Caco-2 (cell line): ENCODE measurements at regions of chr3 and their contacts with region 1.

Region 1: DNA sequence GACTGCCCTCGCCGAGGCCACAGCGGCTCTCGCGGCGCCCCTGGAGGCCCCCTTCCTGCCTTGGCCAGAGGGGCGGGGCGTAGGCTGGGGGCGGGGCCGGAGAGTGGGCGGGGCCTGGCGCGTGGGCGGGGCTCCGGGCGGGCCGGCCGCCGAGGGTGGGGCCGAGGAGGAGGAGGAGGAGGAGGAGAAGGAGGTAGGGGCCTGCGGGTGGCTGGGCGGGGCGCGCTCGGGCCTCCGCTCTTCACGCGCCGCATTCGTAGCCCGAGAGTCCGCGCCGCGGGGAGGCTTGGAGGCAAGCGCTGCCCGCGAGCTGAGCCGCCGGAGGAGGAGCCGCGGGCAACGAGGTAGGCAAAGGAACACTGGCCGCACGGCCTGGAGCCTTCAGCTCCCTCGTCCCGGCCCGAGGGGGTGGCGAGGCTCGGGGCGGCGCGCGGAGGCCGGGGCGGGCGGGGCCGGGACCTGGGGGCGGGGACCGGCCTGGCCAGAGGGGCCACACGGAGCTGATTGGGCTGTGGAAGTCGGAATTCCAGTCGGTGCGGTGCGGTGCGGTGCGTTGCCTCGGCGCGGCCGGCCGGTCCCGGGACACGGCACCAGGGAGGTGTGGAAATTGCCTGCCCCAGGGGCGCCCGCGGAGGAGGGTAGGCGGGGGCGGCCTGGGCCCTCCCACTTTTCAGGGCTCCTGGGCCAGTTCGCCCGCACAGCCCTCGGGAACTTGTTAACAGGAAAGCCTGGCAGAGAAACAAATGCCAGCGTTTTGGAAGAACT is at the start of gene PPP2R3A:
- DNase-seq: peak; percentile 87 to 88
- H3K4me3 ChIP-seq: peak within 1 kb of the TSS; percentile 54
- H3K4me3 Mint-ChIP-seq: peak within 1 kb of the TSS; percentile 75
- H3K27ac Mint-ChIP-seq: peak within 1 kb of the TSS; percentile 79
- H3K4me1 ChIP-seq: peaks cover 36% of the 10 kb centered on the region
- H3K4me1 Mint-ChIP-seq: peaks cover 35% of the 10 kb centered on the region
- H3K27me3 ChIP-seq: no peaks in the 10 kb centered on the region
- H3K27me3 Mint-ChIP-seq: no peaks in the 10 kb centered on the region
- CTCF ChIP-seq: no peak
- total RNA-seq, gene PPP2R3A: 9.5 and 10.2 TPM in 2 replicates

Region 2: GRCh38 chr3:135918580-135918962 is 47.1 kb before region 1 on chr3:
- CTCF ChIA-PET with region 1: no interaction called
- POLR2A ChIA-PET with region 1: no interaction called
- intact Hi-C with region 1: loop called (anchors 2 kb)
- DNase-seq: peak in 1 of 2 experiments; percentile 4
- H3K4me3 ChIP-seq: no peak overlapping the region
- H3K4me3 Mint-ChIP-seq: no peak overlapping the region
- H3K27ac Mint-ChIP-seq: no peak overlapping the region
- H3K4me1 ChIP-seq: no peaks in the 10 kb centered on the region
- H3K4me1 Mint-ChIP-seq: no peaks in the 10 kb centered on the region
- H3K27me3 ChIP-seq: no peaks in the 10 kb centered on the region
- H3K27me3 Mint-ChIP-seq: no peaks in the 10 kb centered on the region
- CTCF ChIP-seq: peak; percentile 25 to 47

Region 3: GRCh38 chr3:135994708-135995337 is 29.1 kb after region 1 on chr3:
- CTCF ChIA-PET with region 1: no interaction called
- POLR2A ChIA-PET with region 1: no interaction called
- intact Hi-C with region 1: loop called (anchors 1 kb)
- DNase-seq: peak; percentile 44 to 50
- H3K4me3 ChIP-seq: no peak overlapping the region
- H3K4me3 Mint-ChIP-seq: peak overlapping the region; percentile 41
- H3K27ac Mint-ChIP-seq: peak overlapping the region; percentile 49
- H3K4me1 ChIP-seq: peaks cover 54% of the 10 kb centered on the region
- H3K4me1 Mint-ChIP-seq: peaks cover 19% of the 10 kb centered on the region
- H3K27me3 ChIP-seq: no peaks in the 10 kb centered on the region
- H3K27me3 Mint-ChIP-seq: no peaks in the 10 kb centered on the region
- CTCF ChIP-seq: no peak

Region 4: DNA sequence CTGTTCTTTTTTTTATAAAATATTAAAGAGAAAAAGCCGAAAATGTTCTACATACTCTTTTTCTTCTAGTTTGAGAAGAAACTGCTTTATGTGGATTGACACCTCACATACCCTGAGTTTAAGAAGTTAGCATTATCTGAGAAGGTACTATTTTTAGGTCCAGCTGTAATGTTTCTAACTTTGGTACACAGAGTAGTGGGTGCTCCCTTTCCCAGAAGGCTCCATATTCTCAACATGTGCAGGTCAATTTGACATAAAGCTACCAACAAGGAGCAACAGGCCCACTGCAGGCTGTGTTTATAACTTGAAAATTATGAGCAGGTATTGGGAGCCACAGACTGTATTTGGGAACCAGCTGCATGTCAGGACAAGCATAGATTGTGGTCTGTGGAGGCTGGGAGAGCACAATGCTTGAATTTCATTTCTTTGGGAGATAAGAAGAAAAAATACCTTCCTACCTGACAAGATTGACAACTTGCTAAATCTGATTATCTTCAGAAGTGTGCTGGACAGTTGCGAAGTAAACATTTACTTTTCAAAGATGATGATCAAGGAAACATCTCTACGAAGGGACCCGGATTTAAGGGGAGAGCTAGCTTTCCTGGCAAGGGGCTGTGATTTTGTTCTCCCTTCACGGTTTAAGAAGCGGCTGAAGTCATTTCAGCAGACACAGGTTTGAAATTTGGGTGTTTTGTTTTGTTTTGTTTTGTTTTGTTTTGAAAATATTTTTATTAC is 57.0 kb after region 1 on chr3:
- CTCF ChIA-PET with region 1: no interaction called
- POLR2A ChIA-PET with region 1: no interaction called
- intact Hi-C with region 1: loop called (anchors 2 kb)
- DNase-seq: peak in 1 of 2 experiments; percentile 18
- H3K4me3 ChIP-seq: no peak overlapping the region
- H3K4me3 Mint-ChIP-seq: peak overlapping the region; percentile 65
- H3K27ac Mint-ChIP-seq: peak overlapping the region; percentile 59
- H3K4me1 ChIP-seq: peaks cover 18% of the 10 kb centered on the region
- H3K4me1 Mint-ChIP-seq: peaks cover 16% of the 10 kb centered on the region
- H3K27me3 ChIP-seq: no peaks in the 10 kb centered on the region
- H3K27me3 Mint-ChIP-seq: no peaks in the 10 kb centered on the region
- CTCF ChIP-seq: no peak